ENCODE measurements at regions of chr6 and their contacts with region 1.

Region 1: GRCh38 chr6:151323791-151324487 is 67.4 kb downstream of the ZBTB2 start:
- DNase-seq: peak; percentile 75 to 91
- H3K4me3 ChIP-seq: no peak overlapping the region
- H3K4me1 ChIP-seq: peaks cover 31% of the 10 kb centered on the region
- H3K27me3 ChIP-seq: no peaks in the 10 kb centered on the region

Region 2: DNA sequence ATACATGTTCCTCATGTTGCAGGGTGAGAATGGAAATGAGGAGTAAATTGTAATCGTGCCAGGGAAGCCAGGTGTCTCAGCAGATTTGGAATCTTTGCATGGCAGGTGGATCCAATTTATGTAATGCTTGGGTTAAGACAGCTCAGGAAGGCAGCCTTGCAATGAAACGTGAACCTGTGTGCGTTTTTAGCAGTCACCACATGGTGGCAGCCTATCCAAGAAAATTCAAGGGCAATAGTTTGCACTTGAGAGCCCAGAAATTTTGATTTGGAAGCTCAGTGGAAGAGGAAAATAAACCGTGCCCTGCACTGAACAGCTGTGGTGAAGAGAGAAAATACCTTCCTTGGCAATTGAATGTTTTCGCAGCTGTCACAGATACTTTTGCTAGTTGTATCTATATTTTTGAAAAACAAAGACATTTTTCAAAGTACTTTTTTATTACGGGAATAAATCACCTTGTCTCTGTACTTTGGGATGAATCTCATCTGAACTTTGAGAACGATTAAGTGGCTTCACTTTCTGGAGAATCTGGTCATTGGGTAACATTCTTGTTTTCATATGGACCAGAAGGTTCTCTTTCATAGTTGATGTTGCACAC is 432.0 kb before region 1 on chr6:
- in situ Hi-C with region 1: loop called (anchors 10 kb)
- DNase-seq: peak; percentile 67 to 82
- H3K4me3 ChIP-seq: no peak overlapping the region
- H3K4me1 ChIP-seq: no peaks in the 10 kb centered on the region
- H3K27me3 ChIP-seq: no peaks in the 10 kb centered on the region

Region 3: DNA sequence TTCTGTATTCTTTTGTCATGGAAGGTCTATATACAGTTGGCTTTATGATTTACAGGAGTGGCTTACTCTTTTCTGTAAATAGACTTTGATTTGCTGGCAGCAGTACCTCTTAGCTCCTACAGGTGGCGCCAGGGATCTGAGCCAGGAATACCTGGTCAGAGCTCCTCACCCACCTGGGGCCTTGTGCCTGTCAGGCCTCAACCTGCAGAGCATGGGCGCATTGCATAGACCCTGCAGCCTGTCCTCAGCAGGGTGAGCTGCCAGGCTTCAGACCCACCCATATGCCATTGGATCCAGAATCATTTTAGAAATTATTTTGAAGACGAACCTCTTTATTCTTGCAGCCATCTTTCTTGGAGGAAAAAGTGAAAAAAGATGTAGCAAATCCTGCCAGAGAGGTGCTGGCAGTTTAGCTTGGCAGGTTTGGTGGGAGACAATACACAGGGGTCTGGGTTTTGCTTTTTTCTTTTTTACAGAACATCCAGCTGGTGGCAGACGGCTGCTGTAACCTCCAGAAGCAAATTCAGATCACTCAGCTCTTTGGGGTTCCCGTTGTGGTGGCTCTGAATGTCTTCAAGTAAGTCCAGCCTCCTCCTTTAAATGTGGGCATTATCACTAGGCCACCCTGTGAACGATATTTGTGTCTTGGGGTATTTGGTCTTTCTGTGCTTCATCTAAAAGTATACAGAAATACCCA is 309.4 kb before region 1 on chr6:
- in situ Hi-C with region 1: loop called (anchors 5 kb)
- DNase-seq: peak; percentile 58 to 79
- H3K4me3 ChIP-seq: no peak overlapping the region
- H3K4me1 ChIP-seq: peaks cover 7% of the 10 kb centered on the region
- H3K27me3 ChIP-seq: no peaks in the 10 kb centered on the region

Measured in HAP-1 (cell line).